MCF 10A (cell line): ENCODE measurements at regions of chr12 and their contacts with region 1.

Region 1: DNA sequence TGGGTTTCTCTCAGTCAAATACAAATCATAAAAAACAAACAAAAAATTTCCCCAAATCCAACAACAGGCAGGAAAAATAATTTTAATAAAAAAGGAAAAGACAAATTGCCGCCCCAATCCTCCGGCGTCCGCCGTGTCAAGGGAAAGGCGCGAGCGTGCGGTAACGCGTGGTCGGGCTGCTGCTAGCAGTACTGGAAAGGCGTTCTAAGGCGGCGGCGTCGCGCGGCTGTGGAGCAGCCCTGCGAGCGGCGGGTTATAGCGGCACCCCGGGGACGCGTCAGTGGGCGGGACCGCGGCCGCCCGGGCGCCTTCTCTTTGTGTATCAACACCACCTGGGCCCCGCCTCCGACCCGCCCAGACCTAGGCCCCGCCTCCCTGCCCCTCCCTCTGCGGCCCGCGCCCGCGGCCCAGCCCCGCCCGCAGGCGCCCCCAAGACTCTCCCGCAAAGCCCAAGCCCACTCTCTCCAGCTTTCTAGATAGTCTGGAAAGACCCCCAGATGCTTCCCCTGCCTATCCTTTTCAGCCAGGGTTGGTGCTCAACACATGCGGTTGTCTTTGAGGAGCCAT is at the start of gene SLC38A2:
- DNase-seq: peak; percentile 92
- H3K4me3 Mint-ChIP-seq: peak within 1 kb of the TSS; percentile 93
- H3K27ac Mint-ChIP-seq: peak within 1 kb of the TSS; percentile 98
- H3K4me1 Mint-ChIP-seq: peaks cover 12% of the 10 kb centered on the region
- H3K27me3 Mint-ChIP-seq: no peaks in the 10 kb centered on the region
- CTCF ChIP-seq: no peak
- total RNA-seq, gene SLC38A2: 817 and 1,070 TPM in 2 replicates

Region 2: DNA sequence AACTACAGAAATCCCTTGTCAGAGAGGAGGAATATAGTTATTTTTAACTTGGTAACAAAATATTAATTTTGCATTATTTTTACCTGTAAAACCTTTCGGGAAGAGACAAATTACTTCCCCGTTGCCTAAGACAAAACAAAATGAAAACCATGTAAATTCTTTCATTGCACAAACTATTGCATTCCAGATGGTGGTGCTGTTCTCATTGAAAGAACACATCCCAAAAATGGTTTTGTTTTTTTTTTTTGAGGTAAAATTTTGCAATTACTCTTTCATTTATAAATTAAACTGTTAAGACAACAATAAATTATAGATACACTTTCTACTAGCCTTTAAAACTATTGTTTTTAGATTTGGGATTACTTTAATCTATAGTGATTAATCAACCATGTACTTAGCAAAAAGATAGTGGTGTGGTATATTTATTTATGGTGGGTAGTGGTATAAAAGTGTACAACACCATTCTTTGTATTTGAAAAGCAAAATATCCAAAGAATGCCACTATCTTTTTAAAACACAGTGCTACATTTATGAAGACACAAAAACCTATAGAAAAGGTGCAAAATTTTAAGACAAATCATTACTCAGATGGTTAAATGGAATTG is 219.3 kb before region 1 on chr12:
- CTCF ChIA-PET with region 1: interaction called, 4 read pairs
- POLR2A ChIA-PET with region 1: interaction called, 14 read pairs
- intact Hi-C with region 1: loop called (anchors 5 kb)
- DNase-seq: peak; percentile 46
- H3K4me3 Mint-ChIP-seq: no peak overlapping the region
- H3K27ac Mint-ChIP-seq: no peak overlapping the region
- H3K4me1 Mint-ChIP-seq: peaks cover 5% of the 10 kb centered on the region
- H3K27me3 Mint-ChIP-seq: no peaks in the 10 kb centered on the region
- CTCF ChIP-seq: peak; percentile 77

Region 3: DNA sequence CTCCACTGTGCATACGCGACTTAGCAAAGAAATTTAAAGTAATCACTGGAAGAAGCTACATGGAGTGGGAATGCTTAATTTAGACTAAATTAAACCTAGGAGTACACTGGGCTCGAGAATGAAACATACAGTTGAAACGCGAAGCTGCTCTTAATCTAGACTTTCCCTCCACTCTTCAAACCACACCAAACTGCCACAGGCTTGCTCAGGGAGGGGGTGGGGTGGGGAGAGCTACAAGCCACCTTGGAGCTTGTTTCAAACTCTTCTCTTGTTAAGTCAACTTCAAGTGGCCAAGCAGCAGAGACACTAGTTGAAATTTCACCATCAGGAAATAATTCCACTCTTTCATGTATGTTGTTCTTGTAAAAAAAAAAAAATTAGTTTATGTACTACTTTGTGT is 173.7 kb before region 1 on chr12:
- CTCF ChIA-PET with region 1: no interaction called
- POLR2A ChIA-PET with region 1: no interaction called
- intact Hi-C with region 1: no loop called
- DNase-seq: no peak
- H3K4me3 Mint-ChIP-seq: no peak overlapping the region
- H3K27ac Mint-ChIP-seq: no peak overlapping the region
- H3K4me1 Mint-ChIP-seq: no peaks in the 10 kb centered on the region
- H3K27me3 Mint-ChIP-seq: no peaks in the 10 kb centered on the region
- CTCF ChIP-seq: no peak

Region 4: DNA sequence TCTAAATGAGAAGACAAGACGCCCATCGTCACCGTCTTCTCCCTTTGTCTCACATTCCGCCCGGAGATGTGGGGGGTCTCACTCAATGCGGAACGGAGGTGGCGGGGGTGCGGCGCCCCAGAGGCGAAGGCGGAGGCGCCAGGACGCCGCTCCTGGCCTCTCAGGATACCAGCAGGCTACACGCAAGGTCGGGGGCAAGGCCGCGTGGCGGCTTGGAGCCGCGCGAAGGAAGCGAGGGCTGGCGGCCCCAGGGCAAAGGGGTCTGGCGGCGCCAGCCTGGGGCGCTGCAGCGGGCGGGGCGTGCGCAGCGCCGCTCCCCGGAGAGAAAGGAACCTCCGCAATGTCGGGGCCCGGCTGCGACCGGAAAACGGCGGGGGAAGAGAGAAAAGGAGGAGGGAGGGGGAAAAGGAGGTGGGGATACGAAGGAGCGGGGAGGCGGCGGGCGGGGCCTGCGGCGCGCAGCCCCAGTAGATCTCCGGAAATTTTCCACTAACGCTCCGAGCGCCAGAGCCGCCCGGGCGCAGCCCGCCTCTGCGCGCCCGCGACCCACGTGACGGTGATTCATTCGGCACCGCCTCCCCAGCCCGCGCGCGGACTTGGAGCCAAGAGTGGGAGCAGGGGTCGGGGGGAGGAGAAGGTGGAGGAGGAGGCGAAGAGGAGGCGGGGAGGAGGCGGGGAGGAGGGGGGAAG is 10.5 kb after region 1 on chr12:
- CTCF ChIA-PET with region 1: interaction called, 5 read pairs
- POLR2A ChIA-PET with region 1: interaction called, 302 read pairs
- intact Hi-C with region 1: loop called (anchors 1 kb)
- DNase-seq: peak; percentile 97
- H3K4me3 Mint-ChIP-seq: peak overlapping the region; percentile 91
- H3K27ac Mint-ChIP-seq: peak overlapping the region; percentile 97
- H3K4me1 Mint-ChIP-seq: peaks cover 33% of the 10 kb centered on the region
- H3K27me3 Mint-ChIP-seq: no peaks in the 10 kb centered on the region
- CTCF ChIP-seq: no peak

Region 5: DNA sequence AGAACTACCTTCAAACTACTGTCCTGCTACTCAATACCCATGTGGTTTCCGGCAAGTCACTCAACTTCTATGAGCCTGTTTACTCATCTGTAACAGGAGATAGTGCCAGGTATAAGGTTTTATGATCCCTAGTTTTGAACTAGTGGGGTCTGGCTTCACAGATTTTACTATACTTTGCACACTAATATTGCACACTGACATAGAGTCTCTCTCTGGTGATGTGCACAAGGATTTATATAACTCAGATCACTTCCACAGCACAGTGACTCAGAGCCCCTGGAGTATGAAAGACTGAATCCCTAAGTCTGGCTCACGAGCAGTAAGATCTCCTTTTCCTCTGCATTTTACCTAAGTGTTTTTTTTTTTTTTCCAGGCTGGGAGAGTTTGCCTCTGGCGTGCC is 69.6 kb after region 1 on chr12:
- CTCF ChIA-PET with region 1: interaction called, 4 read pairs
- POLR2A ChIA-PET with region 1: interaction called, 98 read pairs
- intact Hi-C with region 1: no loop called
- DNase-seq: peak; percentile 54
- H3K4me3 Mint-ChIP-seq: peak overlapping the region; percentile 28
- H3K27ac Mint-ChIP-seq: peak overlapping the region; percentile 97
- H3K4me1 Mint-ChIP-seq: peaks cover 61% of the 10 kb centered on the region
- H3K27me3 Mint-ChIP-seq: no peaks in the 10 kb centered on the region
- CTCF ChIP-seq: no peak

Region 6: GRCh38 chr12:46546634-46547286 is 174.1 kb after region 1 on chr12:
- CTCF ChIA-PET with region 1: interaction called, 4 read pairs
- POLR2A ChIA-PET with region 1: interaction called, 27 read pairs
- intact Hi-C with region 1: no loop called
- DNase-seq: no peak
- H3K4me3 Mint-ChIP-seq: no peak overlapping the region
- H3K27ac Mint-ChIP-seq: peak overlapping the region; percentile 98
- H3K4me1 Mint-ChIP-seq: peaks cover 55% of the 10 kb centered on the region
- H3K27me3 Mint-ChIP-seq: no peaks in the 10 kb centered on the region
- CTCF ChIP-seq: no peak

Region 7: GRCh38 chr12:46933947-46934346 is 561.3 kb after region 1 on chr12:
- CTCF ChIA-PET with region 1: interaction called, 4 read pairs
- POLR2A ChIA-PET with region 1: no interaction called
- intact Hi-C with region 1: loop called (anchors 5 kb)
- DNase-seq: peak; percentile 68
- H3K4me3 Mint-ChIP-seq: no peak overlapping the region
- H3K27ac Mint-ChIP-seq: no peak overlapping the region
- H3K4me1 Mint-ChIP-seq: peaks cover 6% of the 10 kb centered on the region
- H3K27me3 Mint-ChIP-seq: no peaks in the 10 kb centered on the region
- CTCF ChIP-seq: peak; percentile 71